ENCODE measurements at regions of chr16 and their contacts with region 1.

Region 1: DNA sequence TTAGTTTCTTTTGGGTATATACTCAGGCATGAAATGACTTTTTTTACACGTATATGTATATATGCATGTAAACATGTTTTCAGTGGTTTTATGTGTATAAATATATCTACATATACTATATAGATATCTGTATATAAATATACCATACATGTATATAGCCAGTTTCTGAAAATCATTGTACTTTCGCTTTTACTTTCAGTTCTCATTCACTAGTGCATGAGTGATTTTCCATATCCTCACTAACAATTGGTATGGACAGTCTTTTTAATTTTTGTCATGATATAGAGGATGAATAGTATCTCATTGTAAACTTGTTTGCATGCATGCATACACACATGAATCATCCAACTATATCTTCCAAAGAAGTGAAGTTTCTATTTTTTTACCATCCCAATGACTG is 877.1 kb upstream of the CDH8 start:
- DNase-seq: no peak
- ATAC-seq: no peak
- H3K4me3 ChIP-seq: no peak overlapping the region
- H3K27ac ChIP-seq: no peak overlapping the region
- H3K4me1 ChIP-seq: no peaks in the 10 kb centered on the region
- H3K27me3 ChIP-seq: no peaks in the 10 kb centered on the region
- CTCF ChIP-seq: no peak

Region 2: GRCh38 chr16:62899737-62900136 is 13.6 kb before region 1 on chr16:
- intact Hi-C with region 1: loop called in 1 of 10 experiments (anchors 1 kb)
- DNase-seq: no peak
- ATAC-seq: no peak
- H3K4me3 ChIP-seq: no peak overlapping the region
- H3K27ac ChIP-seq: no peak overlapping the region
- H3K4me1 ChIP-seq: no peaks in the 10 kb centered on the region
- H3K27me3 ChIP-seq: no peaks in the 10 kb centered on the region
- CTCF ChIP-seq: no peak